MCF 10A (cell line): ENCODE measurements at regions of chr7 and their contacts with region 1.

Region 1: GRCh38 chr7:137606061-137606674 is 240.6 kb downstream of the DGKI start:
- DNase-seq: peak; percentile 47
- H3K4me3 Mint-ChIP-seq: no peak overlapping the region
- H3K27ac Mint-ChIP-seq: no peak overlapping the region
- H3K4me1 Mint-ChIP-seq: no peaks in the 10 kb centered on the region
- H3K27me3 Mint-ChIP-seq: peaks cover 46% of the 10 kb centered on the region
- CTCF ChIP-seq: peak; percentile 35

Region 2: GRCh38 chr7:137626469-137627067 is 20.4 kb after region 1 on chr7:
- CTCF ChIA-PET with region 1: interaction called, 34 read pairs
- POLR2A ChIA-PET with region 1: interaction called, 4 read pairs
- intact Hi-C with region 1: loop called (anchors 1 kb)
- DNase-seq: peak; percentile 73
- H3K4me3 Mint-ChIP-seq: no peak overlapping the region
- H3K27ac Mint-ChIP-seq: no peak overlapping the region
- H3K4me1 Mint-ChIP-seq: peaks cover 5% of the 10 kb centered on the region
- H3K27me3 Mint-ChIP-seq: peaks cover 25% of the 10 kb centered on the region
- CTCF ChIP-seq: peak; percentile 66

Region 3: GRCh38 chr7:138008547-138009349 is 402.6 kb after region 1 on chr7:
- CTCF ChIA-PET with region 1: interaction called, 9 read pairs
- POLR2A ChIA-PET with region 1: no interaction called
- intact Hi-C with region 1: loop called (anchors 2 kb)
- DNase-seq: peak; percentile 78
- H3K4me3 Mint-ChIP-seq: no peak overlapping the region
- H3K27ac Mint-ChIP-seq: no peak overlapping the region
- H3K4me1 Mint-ChIP-seq: no peaks in the 10 kb centered on the region
- H3K27me3 Mint-ChIP-seq: no peaks in the 10 kb centered on the region
- CTCF ChIP-seq: peak; percentile 90